GM13977 (cell line): ENCODE measurements at regions of chr10 and their contacts with region 1.

Region 1: GRCh38 chr10:99711129-99711719 is 20.7 kb downstream of the COX15 start:
- DNase-seq: peak; percentile 30
- CTCF ChIP-seq: peak; percentile 77

Region 2: DNA sequence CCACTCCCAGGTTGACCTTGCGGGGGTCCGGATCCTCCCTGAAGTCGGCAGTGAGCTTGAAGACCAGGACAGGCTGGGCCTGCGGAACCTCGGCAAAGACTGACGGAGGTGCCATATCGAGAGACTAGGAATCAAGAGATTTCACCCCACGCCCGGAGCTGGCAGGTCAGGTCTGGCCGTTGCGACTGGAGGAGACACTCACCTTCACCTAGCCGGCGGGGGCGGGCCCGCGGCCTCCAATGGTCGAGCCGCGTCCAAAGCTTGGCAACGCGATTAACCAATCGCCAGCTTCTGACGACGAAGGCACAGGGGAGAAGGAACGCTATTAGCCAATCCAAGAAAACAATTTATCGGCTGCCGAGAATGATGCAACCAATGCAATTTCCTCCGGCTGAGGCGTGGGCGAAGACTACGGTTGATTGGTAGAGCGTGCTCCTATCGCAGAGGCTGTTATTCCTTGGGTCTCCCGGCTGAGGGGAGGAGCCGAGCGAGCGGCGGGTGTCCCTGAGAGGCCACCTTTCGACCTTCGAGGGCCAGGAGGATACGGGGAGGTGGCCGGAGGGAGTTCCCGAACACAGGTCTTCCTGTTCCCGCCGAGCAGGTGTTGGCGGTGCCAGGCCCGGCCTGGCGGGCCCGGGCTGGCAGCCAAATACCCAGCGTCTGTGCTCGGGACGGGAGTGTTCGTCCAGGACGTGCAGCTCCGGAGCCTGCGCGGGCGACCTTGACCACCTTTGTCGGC is 280.6 kb before region 1 on chr10 and contains the start of gene GOT1:
- in situ Hi-C with region 1: loop called (anchors 25 kb)
- DNase-seq: peak; percentile 95
- CTCF ChIP-seq: no peak

Region 3: GRCh38 chr10:99648717-99649116 is 62.5 kb before region 1 on chr10:
- in situ Hi-C with region 1: no loop called
- DNase-seq: no peak
- CTCF ChIP-seq: no peak

Region 4: GRCh38 chr10:99870123-99870730 is 159.0 kb after region 1 on chr10:
- in situ Hi-C with region 1: no loop called
- DNase-seq: no peak
- CTCF ChIP-seq: no peak